Mammary epithelial cell (primary cell): ENCODE measurements at regions of chr20 and their contacts with region 1.

Region 1: GRCh38 chr20:49768204-49769047 is 44.2 kb upstream of the SLC9A8 start:
- DNase-seq: peak; percentile 97
- H3K4me3 ChIP-seq: no peak overlapping the region
- H3K27ac ChIP-seq: peak overlapping the region; percentile 44
- H3K4me1 ChIP-seq: peaks cover 36% of the 10 kb centered on the region
- H3K27me3 ChIP-seq: no peaks in the 10 kb centered on the region
- CTCF ChIP-seq: no peak

Region 2: GRCh38 chr20:49268600-49269365 is 499.6 kb before region 1 on chr20:
- CTCF ChIA-PET with region 1: no interaction called
- dilution Hi-C with region 1: no loop called
- in situ Hi-C with region 1: no loop called
- intact Hi-C with region 1: no loop called
- DNase-seq: no peak
- H3K4me3 ChIP-seq: peak overlapping the region in 1 of 3 experiments; percentile 6
- H3K27ac ChIP-seq: no peak overlapping the region
- H3K4me1 ChIP-seq: no peaks in the 10 kb centered on the region
- H3K27me3 ChIP-seq: no peaks in the 10 kb centered on the region
- CTCF ChIP-seq: no peak

Region 3: GRCh38 chr20:49699200-49699992 is 69.0 kb before region 1 on chr20:
- CTCF ChIA-PET with region 1: no interaction called
- dilution Hi-C with region 1: loop called (anchors 5 kb)
- in situ Hi-C with region 1: no loop called
- intact Hi-C with region 1: no loop called
- DNase-seq: peak; percentile 93
- H3K4me3 ChIP-seq: no peak overlapping the region
- H3K27ac ChIP-seq: peak overlapping the region; percentile 79
- H3K4me1 ChIP-seq: peaks cover 58% of the 10 kb centered on the region
- H3K27me3 ChIP-seq: no peaks in the 10 kb centered on the region
- CTCF ChIP-seq: no peak

Region 4: GRCh38 chr20:49724408-49725223 is 43.8 kb before region 1 on chr20:
- CTCF ChIA-PET with region 1: no interaction called
- dilution Hi-C with region 1: loop called (anchors 5 kb)
- in situ Hi-C with region 1: no loop called
- intact Hi-C with region 1: no loop called
- DNase-seq: peak; percentile 14
- H3K4me3 ChIP-seq: no peak overlapping the region
- H3K27ac ChIP-seq: no peak overlapping the region
- H3K4me1 ChIP-seq: no peaks in the 10 kb centered on the region
- H3K27me3 ChIP-seq: no peaks in the 10 kb centered on the region
- CTCF ChIP-seq: no peak

Region 5: DNA sequence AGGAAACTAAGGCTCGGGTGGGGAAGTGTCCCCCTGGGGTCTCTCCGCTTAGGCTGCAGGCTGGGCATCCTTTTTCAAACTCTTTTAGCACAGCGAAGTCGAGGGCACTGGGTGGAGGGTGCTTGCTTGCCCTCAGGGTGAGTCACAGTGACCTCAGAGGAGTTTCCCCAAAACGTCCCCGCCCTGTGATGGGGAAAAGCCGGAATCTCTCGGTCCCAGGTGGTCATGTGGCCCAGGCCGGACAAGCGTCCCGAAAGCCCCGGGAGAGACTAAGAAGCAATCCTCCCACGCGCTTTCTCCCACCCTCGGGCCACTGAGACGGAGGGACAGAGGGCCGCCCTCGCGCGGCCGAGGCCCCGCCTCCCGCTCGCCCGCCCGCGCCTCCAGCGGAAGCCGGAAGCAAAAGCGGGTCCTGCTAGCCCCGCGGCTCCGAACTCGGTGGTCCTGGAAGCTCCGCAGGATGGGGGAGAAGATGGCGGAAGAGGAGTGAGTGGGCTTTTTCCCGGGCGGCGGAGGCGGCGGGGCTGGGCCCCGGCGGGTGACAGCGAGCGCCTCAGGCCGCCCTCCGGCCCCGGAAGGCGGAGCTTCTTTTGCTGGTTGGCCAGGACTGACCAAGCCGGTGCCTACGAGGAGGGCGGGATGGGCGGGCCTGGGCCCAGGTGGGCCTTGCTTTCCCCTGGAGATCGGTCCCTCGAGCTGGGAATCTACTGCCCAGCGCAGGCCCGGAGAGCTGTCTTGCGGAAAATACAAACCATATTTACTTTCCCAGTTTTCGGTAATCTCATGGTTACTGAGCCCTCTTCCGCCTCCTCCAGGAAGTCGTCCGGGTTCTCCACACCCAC is 44.3 kb after region 1 on chr20 and contains the start of gene SLC9A8:
- CTCF ChIA-PET with region 1: no interaction called
- dilution Hi-C with region 1: loop called (anchors 5 kb)
- in situ Hi-C with region 1: no loop called
- intact Hi-C with region 1: no loop called
- DNase-seq: peak; percentile 98
- H3K4me3 ChIP-seq: peak within 1 kb of the TSS; percentile 67 to 96 (median 69)
- H3K27ac ChIP-seq: peak within 1 kb of the TSS; percentile 95
- H3K4me1 ChIP-seq: peaks cover 13% of the 10 kb centered on the region
- H3K27me3 ChIP-seq: no peaks in the 10 kb centered on the region
- CTCF ChIP-seq: peak; percentile 17 to 49
- total RNA-seq, gene SLC9A8: 6.8 to 7.7 TPM

Region 6: GRCh38 chr20:49846206-49846807 is 77.9 kb after region 1 on chr20:
- CTCF ChIA-PET with region 1: no interaction called
- dilution Hi-C with region 1: loop called (anchors 5 kb)
- in situ Hi-C with region 1: no loop called
- intact Hi-C with region 1: no loop called
- DNase-seq: peak; percentile 48
- H3K4me3 ChIP-seq: no peak overlapping the region
- H3K27ac ChIP-seq: no peak overlapping the region
- H3K4me1 ChIP-seq: peaks cover 15% of the 10 kb centered on the region
- H3K27me3 ChIP-seq: no peaks in the 10 kb centered on the region
- CTCF ChIP-seq: peak; percentile 46 to 65